OCI-LY7 (cell line): ENCODE measurements at regions of chr12 and their contacts with region 1.

Region 1: GRCh38 chr12:89927226-89927698 is 218.6 kb upstream of the ATP2B1 start:
- DNase-seq: peak; percentile 92
- H3K4me3 ChIP-seq: peak overlapping the region; percentile 69
- H3K27ac ChIP-seq: peak overlapping the region; percentile 97
- H3K4me1 ChIP-seq: peaks cover 49% of the 10 kb centered on the region
- CTCF ChIP-seq: no peak

Region 2: DNA sequence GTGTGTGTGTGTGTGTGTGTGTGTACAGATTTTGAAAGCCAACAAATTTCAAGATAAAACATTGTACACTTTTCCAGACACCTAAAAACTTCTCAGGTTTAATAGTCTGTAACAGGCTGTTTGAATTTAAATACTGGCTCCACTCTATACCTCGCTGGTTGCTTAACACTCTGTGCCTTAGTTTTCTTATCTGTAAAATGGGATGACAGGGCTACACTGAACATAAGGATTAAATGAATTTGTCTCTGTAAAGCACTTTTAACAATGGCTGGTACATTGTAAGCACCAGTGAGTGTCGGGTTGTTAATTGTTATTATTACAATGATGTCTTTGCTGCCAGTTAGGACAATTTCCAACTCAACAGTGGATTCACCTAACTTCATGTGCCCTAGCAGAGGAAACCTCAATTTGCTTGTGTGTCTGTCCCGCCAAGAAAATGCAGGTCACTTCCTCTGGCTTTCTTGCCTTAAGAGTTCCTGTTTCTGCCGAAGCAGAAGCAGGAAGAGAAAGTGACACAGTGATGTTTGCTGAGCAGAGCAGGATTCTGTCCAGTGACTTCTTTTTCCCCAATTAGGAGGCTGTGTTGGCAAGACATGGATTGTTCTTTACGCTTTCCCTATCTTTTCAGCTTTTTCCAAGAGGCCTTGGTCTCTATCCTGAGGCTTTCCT is 64.6 kb before region 1 on chr12:
- CTCF ChIA-PET with region 1: no interaction called
- POLR2A ChIA-PET with region 1: interaction called, 6 read pairs
- intact Hi-C with region 1: loop called (anchors 5 kb)
- DNase-seq: peak; percentile 91
- H3K4me3 ChIP-seq: peak overlapping the region; percentile 49
- H3K27ac ChIP-seq: peak overlapping the region; percentile 78
- H3K4me1 ChIP-seq: peaks cover 63% of the 10 kb centered on the region
- CTCF ChIP-seq: no peak

Region 3: GRCh38 chr12:89880690-89881350 is 46.4 kb before region 1 on chr12:
- CTCF ChIA-PET with region 1: no interaction called
- POLR2A ChIA-PET with region 1: interaction called, 8 read pairs
- intact Hi-C with region 1: loop called (anchors 2 kb)
- DNase-seq: peak; percentile 82
- H3K4me3 ChIP-seq: peak overlapping the region; percentile 10
- H3K27ac ChIP-seq: peak overlapping the region; percentile 63
- H3K4me1 ChIP-seq: peaks cover 46% of the 10 kb centered on the region
- CTCF ChIP-seq: no peak

Region 4: GRCh38 chr12:90076851-90077319 is 149.6 kb after region 1 on chr12:
- CTCF ChIA-PET with region 1: no interaction called
- POLR2A ChIA-PET with region 1: interaction called, 13 read pairs
- intact Hi-C with region 1: loop called (anchors 5 kb)
- DNase-seq: peak; percentile 82
- H3K4me3 ChIP-seq: no peak overlapping the region
- H3K27ac ChIP-seq: peak overlapping the region; percentile 87
- H3K4me1 ChIP-seq: peaks cover 66% of the 10 kb centered on the region
- CTCF ChIP-seq: no peak

Region 5: DNA sequence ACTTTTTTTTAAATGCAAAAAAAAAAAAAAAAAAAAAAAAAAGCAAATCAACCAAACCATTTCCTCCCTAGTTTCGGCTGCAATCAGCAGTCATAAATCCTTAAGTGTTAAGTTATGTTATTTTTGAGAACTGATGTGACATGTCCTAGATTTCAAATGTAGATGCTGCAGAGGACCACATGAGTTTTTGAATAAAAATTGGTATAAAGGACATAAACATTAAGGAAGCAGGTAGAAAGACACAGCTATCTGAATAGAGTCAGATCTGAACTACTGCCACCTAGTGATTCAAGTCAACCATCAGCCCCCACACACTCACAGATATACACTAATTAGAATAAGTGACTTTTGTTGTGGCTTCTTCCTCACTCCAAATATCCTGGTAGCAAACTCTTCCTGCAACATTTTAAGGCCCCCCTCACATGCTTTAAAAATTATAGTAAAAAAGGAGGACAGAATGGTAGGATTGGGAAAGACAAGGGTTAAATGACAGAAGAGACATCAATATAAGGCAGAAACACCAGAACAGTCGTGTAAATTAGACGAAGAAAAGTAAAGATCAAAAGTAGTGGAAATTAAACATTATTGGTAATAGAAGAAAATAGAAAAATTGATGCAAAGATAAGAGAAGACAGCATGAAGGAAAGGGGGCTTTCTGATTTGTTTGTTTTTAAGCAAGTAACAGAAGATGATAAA is 175.8 kb after region 1 on chr12:
- CTCF ChIA-PET with region 1: no interaction called
- POLR2A ChIA-PET with region 1: interaction called, 3 read pairs
- intact Hi-C with region 1: loop called (anchors 5 kb)
- DNase-seq: peak; percentile 69
- H3K4me3 ChIP-seq: no peak overlapping the region
- H3K27ac ChIP-seq: no peak overlapping the region
- H3K4me1 ChIP-seq: peaks cover 11% of the 10 kb centered on the region
- CTCF ChIP-seq: peak; percentile 91